ENCODE measurements at regions of chr20 and their contacts with region 1.

Region 1: GRCh38 chr20:45971675-45972499 is at the start of gene ZNF335:
- DNase-seq: peak; percentile 82
- H3K4me3 ChIP-seq: peak within 1 kb of the TSS; percentile 97
- CTCF ChIP-seq: peak; percentile 38

Region 2: GRCh38 chr20:45823949-45824835 is 147.7 kb before region 1 on chr20:
- CTCF ChIA-PET with region 1: interaction called, 28 read pairs
- POLR2A ChIA-PET with region 1: no interaction called
- DNase-seq: no peak
- H3K4me3 ChIP-seq: no peak overlapping the region; the same call in 1 of the 2 replicates
- CTCF ChIP-seq: peak; percentile 61

Region 3: DNA sequence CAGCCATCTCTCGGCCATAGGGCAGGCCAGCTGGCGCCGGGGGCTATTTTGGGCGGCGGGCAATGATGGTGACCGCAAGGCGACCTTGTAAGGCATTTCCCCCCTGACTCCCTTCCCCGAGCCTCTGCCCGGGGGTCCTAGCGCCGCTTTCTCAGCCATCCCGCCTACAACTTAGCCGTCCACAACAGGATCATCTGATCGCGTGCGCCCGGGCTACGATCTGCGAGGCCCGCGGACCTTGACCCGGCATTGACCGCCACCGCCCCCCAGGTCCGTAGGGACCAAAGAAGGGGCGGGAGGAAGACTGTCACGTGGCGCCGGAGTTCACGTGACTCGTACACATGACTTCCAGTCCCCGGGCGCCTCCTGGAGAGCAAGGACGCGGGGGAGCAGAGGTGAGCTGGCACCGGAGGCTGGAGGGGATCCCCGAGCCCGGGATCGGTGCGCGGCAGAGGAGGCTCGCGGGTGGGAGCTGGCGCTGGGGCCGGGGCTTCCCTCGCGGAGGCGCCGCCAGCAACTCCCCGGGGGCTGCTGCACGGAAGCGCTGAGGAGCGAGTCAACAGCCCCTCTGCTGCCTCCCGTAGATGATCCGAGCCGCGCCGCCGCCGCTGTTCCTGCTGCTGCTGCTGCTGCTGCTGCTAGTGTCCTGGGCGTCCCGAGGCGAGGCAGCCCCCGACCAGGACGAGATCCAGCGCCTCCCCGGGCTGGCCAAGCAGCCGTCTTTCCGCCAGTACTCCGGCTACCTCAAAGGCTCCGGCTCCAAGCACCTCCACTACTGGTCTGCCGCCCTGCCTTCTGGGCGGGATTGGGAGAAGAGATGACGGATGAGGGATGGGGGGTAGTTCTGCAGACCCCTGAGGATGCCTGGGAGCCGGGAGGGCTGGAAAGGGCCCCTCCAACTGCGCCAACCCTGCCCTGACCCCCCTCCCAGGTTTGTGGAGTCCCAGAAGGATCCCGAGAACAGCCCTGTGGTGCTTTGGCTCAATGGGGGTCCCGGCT is 80.6 kb before region 1 on chr20 and contains the starts of genes CTSA and NEURL2:
- CTCF ChIA-PET with region 1: interaction called, 43 read pairs
- POLR2A ChIA-PET with region 1: interaction called, 3 read pairs
- DNase-seq: peak; percentile 54
- H3K4me3 ChIP-seq: peak within 1 kb of the TSS; percentile 80
- CTCF ChIP-seq: peak; percentile 12

Region 4: DNA sequence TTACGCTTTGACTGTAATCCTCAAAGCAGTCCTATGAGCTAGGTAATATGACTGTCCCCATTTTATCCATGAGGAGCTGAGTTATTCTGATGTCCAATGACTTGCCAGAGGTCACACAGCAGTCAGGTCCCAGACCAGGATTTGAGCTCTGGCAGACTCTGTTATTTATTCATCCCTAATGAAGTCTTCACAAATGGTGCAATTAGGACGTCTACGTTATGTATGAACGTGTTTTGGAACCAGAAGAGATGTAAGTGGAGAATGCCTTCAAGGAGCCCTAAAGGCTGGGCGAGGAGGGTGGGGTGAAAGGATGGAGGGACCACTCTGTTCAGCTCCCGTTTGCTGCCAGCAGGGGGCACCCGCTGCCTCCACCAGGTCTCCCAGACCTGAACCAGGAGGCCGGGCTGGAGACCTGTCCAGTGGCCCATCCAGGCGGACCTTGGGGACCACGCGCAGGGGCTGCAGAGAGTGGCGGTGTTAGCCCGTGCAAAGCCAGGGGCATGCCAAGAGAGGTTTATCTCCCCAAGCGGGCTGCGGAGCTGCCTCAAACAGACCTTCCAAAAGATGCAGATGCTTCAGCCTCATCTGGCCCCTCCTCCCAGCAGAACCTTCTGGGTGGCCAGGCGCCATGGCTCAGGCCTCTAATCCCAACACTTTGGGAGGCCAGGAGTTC is 15.4 kb after region 1 on chr20:
- CTCF ChIA-PET with region 1: interaction called, 74 read pairs
- POLR2A ChIA-PET with region 1: interaction called, 3 read pairs
- DNase-seq: no peak
- H3K4me3 ChIP-seq: no peak overlapping the region
- CTCF ChIP-seq: peak; percentile 93

Region 5: GRCh38 chr20:45998761-45999160 is 26.9 kb after region 1 on chr20:
- CTCF ChIA-PET with region 1: no interaction called
- POLR2A ChIA-PET with region 1: no interaction called
- DNase-seq: no peak
- H3K4me3 ChIP-seq: no peak overlapping the region
- CTCF ChIP-seq: no peak

Region 6: DNA sequence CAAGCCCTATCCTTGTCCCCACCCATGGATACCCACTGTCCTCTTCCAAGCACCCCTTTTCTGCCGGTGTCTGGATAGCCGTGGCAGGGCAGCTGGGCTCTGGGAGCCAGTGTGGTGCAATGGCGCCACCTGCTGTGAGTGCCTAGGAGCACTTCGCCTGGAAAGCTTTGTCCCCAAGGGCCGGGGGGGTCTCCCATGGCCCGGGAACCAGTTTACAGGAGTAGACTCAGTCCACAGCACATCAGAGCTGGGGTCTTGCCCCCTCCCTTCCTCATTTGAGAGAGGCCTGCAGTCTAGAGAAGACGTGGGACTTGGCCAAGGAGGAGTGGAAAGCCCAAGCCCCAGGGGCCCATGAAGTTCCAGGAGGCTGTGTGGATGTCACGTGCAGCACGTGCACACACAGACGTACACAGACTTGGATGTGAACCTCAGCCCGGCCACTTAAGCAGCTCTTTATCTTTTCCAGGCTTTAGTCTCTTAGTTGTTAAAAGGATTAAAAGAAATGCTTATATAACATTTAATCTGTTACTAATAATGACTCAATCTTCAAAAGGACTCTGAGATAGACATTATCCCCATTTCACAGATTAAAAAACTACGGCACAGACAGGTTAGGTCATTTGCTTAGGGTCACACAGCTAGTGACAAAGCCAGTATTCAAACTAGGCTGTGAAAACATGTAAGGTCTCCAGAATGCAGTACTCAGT is 377.3 kb after region 1 on chr20:
- CTCF ChIA-PET with region 1: interaction called, 13 read pairs
- POLR2A ChIA-PET with region 1: no interaction called
- DNase-seq: no peak
- H3K4me3 ChIP-seq: no peak overlapping the region
- CTCF ChIP-seq: peak; percentile 73